ENCODE measurements at regions of chr9 and their contacts with region 1.

Region 1: GRCh38 chr9:97740848-97741821 is 44.0 kb upstream of the XPA start:
- DNase-seq: peak; percentile 64 to 75
- ATAC-seq: peak; percentile 77 to 95 (median 93)
- H3K4me3 ChIP-seq: peak overlapping the region in 9 of 10 donors; percentile 28 to 60 (median 43)
- H3K27ac ChIP-seq: peak overlapping the region in 7 of 10 donors; percentile 4 to 72 (median 36)
- H3K4me1 ChIP-seq: peaks cover 0 to 15% (median 11%) of the 10 kb centered on the region in 9 donors
- H3K27me3 ChIP-seq: peaks cover 0 to 83% (median 42%) of the 10 kb centered on the region in 7 donors
- CTCF ChIP-seq: peak in 6 of 9 donors; percentile 8 to 39 (median 35)

Region 2: DNA sequence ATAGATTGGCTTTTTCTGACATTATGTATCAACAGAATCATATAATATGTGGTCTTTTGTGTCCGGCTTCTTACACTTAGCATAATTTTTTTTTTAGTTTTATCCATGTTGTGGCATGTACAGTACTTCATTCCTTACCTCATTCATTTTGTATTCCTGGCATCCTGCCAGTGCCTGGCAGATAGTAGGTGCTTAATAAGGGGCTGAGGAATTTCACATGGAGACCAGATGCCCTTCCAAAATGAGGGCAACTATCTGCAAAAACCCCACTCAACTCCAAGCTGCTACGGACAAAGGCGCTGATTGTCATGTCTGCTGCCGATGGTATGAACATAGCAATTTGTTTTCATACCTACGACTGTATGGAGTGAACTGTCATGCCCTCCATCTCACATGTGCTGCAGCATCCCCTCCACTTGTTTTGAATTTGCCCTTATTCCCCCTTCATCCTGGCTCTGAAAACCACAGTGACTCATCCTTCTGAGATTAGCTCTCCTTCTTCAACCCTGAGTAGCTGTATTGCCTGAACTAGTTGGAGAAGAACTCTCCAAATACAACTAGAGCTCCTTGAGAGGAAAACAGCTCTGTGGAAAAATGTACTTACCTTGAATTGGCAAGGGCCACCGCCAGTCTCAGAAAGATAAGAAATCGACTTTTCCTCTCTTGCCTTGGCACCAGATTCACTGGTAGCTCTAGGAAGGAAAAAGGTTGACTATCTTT is 70.6 kb after region 1 on chr9:
- intact Hi-C with region 1: loop called in 1 of 10 experiments (anchors 10 kb)
- DNase-seq: no peak
- ATAC-seq: no peak
- H3K4me3 ChIP-seq: no peak overlapping the region
- H3K27ac ChIP-seq: no peak overlapping the region
- H3K4me1 ChIP-seq: peaks cover 0 to 7% (median 0%) of the 10 kb centered on the region in 9 donors
- H3K27me3 ChIP-seq: peaks cover 0 to 22% (median 7%) of the 10 kb centered on the region in 7 donors
- CTCF ChIP-seq: no peak

Region 3: DNA sequence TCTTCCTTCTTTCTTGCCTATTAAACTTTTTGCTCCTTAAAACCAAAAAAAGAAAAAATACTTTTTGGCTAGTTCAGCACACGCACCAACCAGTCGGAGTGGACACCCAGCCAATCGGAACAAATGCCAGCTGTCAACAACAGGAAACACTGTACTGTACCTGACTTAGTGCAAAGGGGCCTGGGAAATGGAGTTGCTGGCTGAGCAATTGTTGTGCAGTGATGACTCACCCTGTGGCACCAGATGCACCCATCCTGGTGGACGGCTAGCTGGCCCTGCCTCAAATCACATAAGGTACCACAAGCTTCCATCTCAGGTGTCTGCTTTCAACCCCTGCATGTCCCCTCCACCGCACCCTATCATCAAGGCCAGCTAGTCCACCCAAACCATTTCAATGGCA is 132.7 kb after region 1 on chr9:
- intact Hi-C with region 1: loop called in 1 of 10 experiments (anchors 10 kb)
- DNase-seq: no peak
- ATAC-seq: no peak
- H3K4me3 ChIP-seq: no peak overlapping the region
- H3K27ac ChIP-seq: no peak overlapping the region
- H3K4me1 ChIP-seq: peaks cover 0 to 16% (median 4%) of the 10 kb centered on the region in 9 donors
- H3K27me3 ChIP-seq: peaks cover 0 to 14% (median 0%) of the 10 kb centered on the region in 7 donors
- CTCF ChIP-seq: no peak